ENCODE measurements at regions of chr6 and their contacts with region 1.

Region 1: GRCh38 chr6:149211046-149211571 is 106.4 kb upstream of the TAB2 start:
- DNase-seq: peak; percentile 36
- ATAC-seq: peak; percentile 54
- H3K4me3 Mint-ChIP-seq: no peak overlapping the region
- H3K27ac Mint-ChIP-seq: peak overlapping the region; percentile 82
- H3K4me1 Mint-ChIP-seq: peaks cover 3% of the 10 kb centered on the region
- H3K27me3 Mint-ChIP-seq: no peaks in the 10 kb centered on the region

Region 2: DNA sequence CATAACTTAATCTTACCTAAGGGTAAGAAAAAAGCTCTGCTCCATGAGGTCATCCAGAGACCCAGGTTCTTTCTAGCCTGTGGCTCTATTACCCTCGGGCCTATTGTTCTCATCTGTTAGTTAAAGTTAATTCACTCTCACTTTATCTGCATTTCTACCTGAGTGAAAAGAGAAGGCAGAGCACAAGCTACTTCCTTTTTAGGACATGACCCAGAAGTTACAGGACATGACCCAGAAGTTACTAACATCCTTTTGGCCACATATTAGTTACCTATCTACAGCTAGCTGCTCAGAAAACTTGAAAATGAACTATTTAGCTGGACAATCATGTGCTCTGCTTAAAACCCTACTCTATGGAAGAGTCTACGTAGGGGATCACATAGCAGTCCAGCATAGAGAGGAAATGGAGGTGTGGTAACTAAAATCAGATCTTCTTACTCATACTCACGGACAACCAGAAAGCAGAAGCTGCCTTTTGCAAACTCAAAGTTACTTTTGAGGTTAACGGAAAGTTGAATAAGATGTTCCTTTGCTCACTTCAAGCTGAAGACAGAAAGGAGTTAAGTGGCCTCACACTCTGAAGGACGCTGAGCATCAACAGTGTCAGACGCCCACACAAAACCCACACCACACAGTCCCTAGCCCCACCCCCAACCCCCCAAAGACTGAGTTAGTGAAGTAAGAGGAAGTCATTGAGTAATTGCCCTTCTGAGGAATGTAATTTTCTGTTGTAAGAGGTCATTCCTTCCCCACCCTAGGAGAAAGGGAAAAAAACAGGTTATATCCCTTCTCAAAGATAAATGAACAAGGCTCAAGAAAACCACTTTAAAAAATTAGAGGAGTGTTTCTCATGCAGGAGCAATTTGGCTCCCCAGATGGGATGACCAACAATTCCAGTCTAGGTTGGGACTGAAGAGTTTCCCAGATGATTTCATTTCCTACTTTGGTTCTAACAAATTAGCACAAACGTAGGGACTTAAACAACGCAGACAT is 60.5 kb after region 1 on chr6:
- CTCF ChIA-PET with region 1: no interaction called
- POLR2A ChIA-PET with region 1: no interaction called
- intact Hi-C with region 1: loop called in 1 of 2 experiments (anchors 2 kb)
- DNase-seq: peak; percentile 80
- ATAC-seq: peak; percentile 83
- H3K4me3 Mint-ChIP-seq: peak overlapping the region; percentile 26
- H3K27ac Mint-ChIP-seq: peak overlapping the region; percentile 89
- H3K4me1 Mint-ChIP-seq: peaks cover 35% of the 10 kb centered on the region
- H3K27me3 Mint-ChIP-seq: no peaks in the 10 kb centered on the region

Region 3: DNA sequence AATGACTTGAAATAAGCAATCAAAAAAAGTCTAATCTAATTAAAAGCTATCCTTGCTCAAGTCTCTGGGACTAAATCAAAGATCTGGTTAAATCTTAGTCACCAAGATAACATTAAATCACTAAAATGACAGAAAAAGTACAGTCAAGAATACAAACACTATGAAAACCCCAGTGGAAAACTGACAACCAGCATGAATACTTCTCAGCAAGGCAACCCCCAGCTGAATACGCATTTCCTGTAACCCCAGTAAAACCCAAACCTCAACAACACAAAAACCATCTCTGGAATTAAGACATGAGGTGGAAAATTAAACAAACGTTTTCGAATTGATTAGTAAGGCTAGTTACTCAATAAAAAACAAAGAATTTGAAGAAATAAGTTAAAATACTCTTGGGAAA is 297.4 kb after region 1 on chr6:
- CTCF ChIA-PET with region 1: no interaction called
- POLR2A ChIA-PET with region 1: no interaction called
- intact Hi-C with region 1: loop called in 1 of 2 experiments (anchors 10 kb)
- DNase-seq: peak; percentile 60
- ATAC-seq: peak; percentile 90
- H3K4me3 Mint-ChIP-seq: peak overlapping the region; percentile 48
- H3K27ac Mint-ChIP-seq: peak overlapping the region; percentile 99
- H3K4me1 Mint-ChIP-seq: peaks cover 62% of the 10 kb centered on the region
- H3K27me3 Mint-ChIP-seq: no peaks in the 10 kb centered on the region

Measured in activated CD4-positive, alpha-beta T cell treated with anti-CD3 and anti-CD28 coated beads for 36 hours (primary cell).